Astrocyte of the cerebellum (primary cell): ENCODE measurements at regions of chr2 and their contacts with region 1.

Region 1: GRCh38 chr2:64036034-64036705 is 16.9 kb upstream of the VPS54 start:
- DNase-seq: no peak
- H3K4me3 ChIP-seq: no peak overlapping the region
- CTCF ChIP-seq: no peak

Region 2: GRCh38 chr2:64311948-64312621 is 275.9 kb after region 1 on chr2:
- in situ Hi-C with region 1: loop called (anchors 25 kb)
- DNase-seq: peak; percentile 66
- H3K4me3 ChIP-seq: peak overlapping the region; percentile 3
- CTCF ChIP-seq: peak; percentile 60